Ascending aorta (tissue), 2 donors: ENCODE measurements at regions of chr9 and their contacts with region 1.

Region 1: DNA sequence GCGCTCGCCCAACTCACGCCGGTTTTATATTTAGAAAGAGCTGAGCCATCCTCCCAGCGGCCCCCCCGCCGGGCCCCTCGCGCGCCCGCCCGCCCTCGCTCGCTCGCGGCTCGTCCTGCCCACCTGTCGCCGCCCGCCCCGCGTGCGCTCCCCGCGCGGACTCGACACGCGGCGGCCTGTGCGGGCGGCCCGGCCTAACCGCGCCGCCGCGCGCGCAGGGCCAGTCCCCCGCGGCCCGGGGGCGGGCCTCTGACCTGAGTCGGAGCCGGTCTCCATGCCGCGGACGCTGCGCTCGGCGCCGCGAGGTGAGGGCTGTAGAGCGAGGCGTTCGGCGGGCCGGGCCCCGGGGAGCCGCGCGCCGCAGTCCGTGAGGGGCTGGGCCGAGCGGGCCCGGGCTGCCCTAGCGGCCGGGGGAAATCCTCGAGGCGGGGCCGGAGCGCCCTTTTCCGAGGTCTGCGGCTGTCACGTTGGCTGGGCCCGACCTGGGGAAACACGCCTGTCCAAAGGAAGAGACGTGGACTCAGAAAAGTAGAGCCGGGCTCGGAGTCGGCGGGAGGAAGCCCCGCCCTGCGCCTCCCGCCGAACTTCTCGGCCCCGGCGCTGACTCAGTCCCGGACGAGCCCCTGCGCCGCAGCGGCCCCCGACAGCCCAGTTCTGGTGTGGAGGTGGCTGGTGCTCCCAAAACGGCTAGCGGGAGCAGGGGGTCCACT is at the start of gene ECPAS:
- DNase-seq: peak; percentile 31 to 85
- H3K4me3 ChIP-seq: peak within 1 kb of the TSS; percentile 92 to 98
- H3K27ac ChIP-seq: peak within 1 kb of the TSS; percentile 97 to 99
- H3K4me1 ChIP-seq: peaks cover 7 to 14% of the 10 kb centered on the region in 2 donors
- H3K27me3 ChIP-seq: no peaks in the 10 kb centered on the region
- CTCF ChIP-seq: no peak
- total RNA-seq, gene ECPAS: 32.6 TPM

Region 2: GRCh38 chr9:110486218-110486617 is 997.8 kb before region 1 on chr9:
- intact Hi-C with region 1: no loop called
- DNase-seq: no peak
- H3K4me3 ChIP-seq: no peak overlapping the region
- H3K27ac ChIP-seq: no peak overlapping the region
- H3K4me1 ChIP-seq: no peaks in the 10 kb centered on the region
- H3K27me3 ChIP-seq: no peaks in the 10 kb centered on the region
- CTCF ChIP-seq: no peak

Region 3: GRCh38 chr9:111195766-111196165 is 288.3 kb before region 1 on chr9:
- intact Hi-C with region 1: no loop called
- DNase-seq: no peak
- H3K4me3 ChIP-seq: no peak overlapping the region
- H3K27ac ChIP-seq: no peak overlapping the region
- H3K4me1 ChIP-seq: no peaks in the 10 kb centered on the region
- H3K27me3 ChIP-seq: no peaks in the 10 kb centered on the region
- CTCF ChIP-seq: no peak

Region 4: GRCh38 chr9:111525056-111525977 is 41.3 kb after region 1 on chr9 and contains the start of gene ZNF483:
- intact Hi-C with region 1: loop called (anchors 1 kb)
- DNase-seq: peak; percentile 13 to 78
- H3K4me3 ChIP-seq: peak within 1 kb of the TSS; percentile 78 to 92
- H3K27ac ChIP-seq: peak within 1 kb of the TSS; percentile 54 to 61
- H3K4me1 ChIP-seq: no peaks in the 10 kb centered on the region
- H3K27me3 ChIP-seq: no peaks in the 10 kb centered on the region
- CTCF ChIP-seq: no peak
- total RNA-seq, gene ZNF483: 3.1 TPM